Pancreas (tissue), 10 donors: ENCODE measurements at regions of chr1 and their contacts with region 1.

Region 1: GRCh38 chr1:201042779-201043461 is 19.4 kb upstream of the KIF21B start:
- DNase-seq: peak in 4 of 6 donors; percentile 47 to 76 (median 74)
- ATAC-seq: peak; percentile 75 to 95 (median 90)
- H3K4me3 ChIP-seq: no peak overlapping the region
- H3K27ac ChIP-seq: no peak overlapping the region
- H3K4me1 ChIP-seq: no peaks in the 10 kb centered on the region
- H3K27me3 ChIP-seq: no peaks in the 10 kb centered on the region
- CTCF ChIP-seq: peak; percentile 53 to 79 (median 74)

Region 2: DNA sequence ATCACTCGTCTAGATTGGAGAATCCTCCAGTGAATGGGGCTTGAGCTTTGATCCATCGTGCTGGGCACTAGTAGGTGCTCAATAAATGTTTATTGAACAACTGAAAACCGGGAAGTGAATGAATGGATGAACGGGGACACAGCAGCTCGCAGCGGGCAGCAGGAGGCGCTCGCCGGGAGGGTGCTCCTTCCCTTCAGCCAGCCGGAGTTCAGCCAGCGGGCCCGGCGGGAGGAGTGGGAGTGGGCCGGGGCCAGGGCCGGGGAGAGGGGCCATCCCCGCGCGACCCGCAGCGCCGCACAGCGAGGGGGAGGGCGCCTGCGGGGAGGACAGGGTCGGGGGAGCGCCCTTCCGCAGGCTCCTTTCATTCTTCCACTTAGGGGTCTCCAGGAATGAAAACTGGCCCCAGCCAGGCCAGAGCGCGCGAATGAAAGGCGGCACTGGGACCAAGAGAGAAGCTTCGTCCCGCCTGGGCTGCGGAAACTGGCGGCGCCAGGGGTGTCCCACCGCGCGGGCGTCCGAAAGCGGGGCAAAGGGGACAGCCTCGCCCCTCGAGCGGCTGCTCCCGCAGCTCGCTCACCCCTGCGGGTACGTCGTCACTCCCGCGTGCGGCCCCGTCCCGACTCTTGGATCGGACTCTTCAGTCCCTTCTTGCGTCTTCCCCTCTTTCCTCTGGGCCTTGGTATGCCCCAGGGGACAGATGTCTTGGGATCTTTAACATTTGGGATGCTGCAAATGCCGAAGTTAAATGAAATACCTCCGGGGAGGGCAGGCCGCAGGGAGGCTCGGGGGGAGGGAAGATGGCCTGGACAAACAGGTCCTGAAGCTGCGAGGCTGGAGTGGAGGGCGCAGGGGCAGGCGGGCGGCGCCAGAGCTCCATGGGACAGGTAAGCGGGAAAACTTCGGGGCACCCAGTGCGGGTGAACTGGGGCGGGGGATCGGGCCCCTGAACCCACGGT is 151.8 kb before region 1 on chr1:
- intact Hi-C with region 1: loop called in 1 of 3 experiments (anchors 10 kb)
- DNase-seq: peak in 5 of 6 donors; percentile 34 to 77 (median 51)
- ATAC-seq: peak; percentile 39 to 71 (median 56)
- H3K4me3 ChIP-seq: peak overlapping the region; percentile 33 to 66 (median 44)
- H3K27ac ChIP-seq: peak overlapping the region; percentile 67 to 72 (median 69)
- H3K4me1 ChIP-seq: no peaks in the 10 kb centered on the region
- H3K27me3 ChIP-seq: no peaks in the 10 kb centered on the region
- CTCF ChIP-seq: peak in 2 of 4 donors; percentile 6 to 13

Region 3: DNA sequence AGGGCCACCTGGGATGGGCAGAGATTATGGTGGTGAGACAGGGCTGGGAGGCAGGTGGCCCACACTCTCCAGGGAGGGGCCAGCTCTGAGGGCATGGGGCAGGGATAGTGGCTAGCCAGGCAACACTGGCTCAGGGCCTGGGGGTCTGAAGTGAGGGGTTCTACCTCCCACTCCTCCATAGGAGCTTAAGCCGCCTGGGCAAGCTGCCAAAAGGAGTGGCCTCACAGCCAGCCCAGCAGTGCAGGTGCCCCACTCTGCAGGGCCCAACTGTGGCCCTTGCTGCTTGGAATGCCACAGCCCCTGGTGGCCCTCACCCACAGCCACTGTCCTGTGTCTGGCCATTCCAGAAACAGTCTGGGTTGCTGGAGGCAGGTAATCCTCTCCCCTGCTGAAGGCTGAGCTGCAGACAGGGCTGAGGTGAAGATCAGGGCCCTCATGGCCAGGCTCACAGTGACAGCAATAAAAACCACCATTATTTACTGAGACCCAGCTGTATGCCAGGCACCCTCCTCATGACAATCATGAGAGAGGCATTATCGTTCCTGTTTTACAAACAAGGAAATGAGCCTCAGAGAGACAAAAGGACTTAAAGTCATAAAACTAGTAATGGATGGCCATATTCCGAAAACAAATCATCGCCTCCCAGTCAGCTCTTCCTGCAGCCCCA is 50.4 kb before region 1 on chr1:
- intact Hi-C with region 1: no loop called
- DNase-seq: no peak
- ATAC-seq: no peak
- H3K4me3 ChIP-seq: no peak overlapping the region
- H3K27ac ChIP-seq: no peak overlapping the region
- H3K4me1 ChIP-seq: no peaks in the 10 kb centered on the region
- H3K27me3 ChIP-seq: no peaks in the 10 kb centered on the region
- CTCF ChIP-seq: no peak